ENCODE measurements at regions of chr1 and their contacts with region 1.

Region 1: GRCh38 chr1:22025368-22026155 is 24.1 kb downstream of the CELA3A start:
- DNase-seq: peak; percentile 91
- H3K4me3 Mint-ChIP-seq: peak overlapping the region; percentile 91
- H3K27ac Mint-ChIP-seq: peak overlapping the region; percentile 100
- H3K4me1 Mint-ChIP-seq: peaks cover 41% of the 10 kb centered on the region
- H3K27me3 Mint-ChIP-seq: no peaks in the 10 kb centered on the region

Region 2: DNA sequence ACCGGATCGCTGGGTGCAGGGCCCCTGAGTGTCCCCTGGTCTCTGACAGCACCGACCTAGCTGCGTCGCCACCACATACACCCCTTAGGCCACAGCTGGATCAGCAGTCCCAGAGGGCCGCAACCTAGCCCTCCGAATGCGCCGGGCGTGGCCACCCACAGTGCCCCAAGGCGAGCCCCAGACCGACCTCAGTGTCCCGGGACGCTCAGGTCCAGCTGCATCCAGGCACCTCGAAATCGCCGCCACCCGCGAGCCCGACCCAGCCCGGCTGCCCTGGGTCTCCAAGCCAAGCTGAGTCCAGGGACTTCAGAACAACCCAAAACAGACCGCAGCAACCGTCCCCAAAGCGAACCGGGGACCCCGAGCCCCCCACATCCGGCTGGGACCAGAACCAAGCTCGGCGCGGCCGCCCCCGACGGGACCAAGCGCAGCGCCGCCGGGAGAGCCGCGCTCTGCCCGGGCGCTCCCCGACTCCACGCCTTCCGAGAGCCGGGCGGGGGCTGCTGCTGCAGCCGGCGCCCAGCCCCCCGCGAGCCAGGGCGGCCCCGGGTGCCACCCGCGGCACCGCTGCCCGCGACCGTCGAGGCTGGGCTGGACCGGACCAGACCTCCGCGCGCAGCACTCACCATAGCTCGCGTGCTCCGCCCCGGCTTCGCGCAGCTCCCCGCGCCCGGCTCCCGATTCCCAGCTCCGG is 680.7 kb before region 1 on chr1:
- intact Hi-C with region 1: loop called (anchors 10 kb)
- DNase-seq: no peak
- H3K4me3 Mint-ChIP-seq: peak overlapping the region; percentile 83
- H3K27ac Mint-ChIP-seq: peak overlapping the region; percentile 51
- H3K4me1 Mint-ChIP-seq: peaks cover 30% of the 10 kb centered on the region
- H3K27me3 Mint-ChIP-seq: peaks cover under 1% of the 10 kb centered on the region

Region 3: GRCh38 chr1:21782868-21783678 is 242.5 kb before region 1 on chr1 and contains the start of gene USP48:
- intact Hi-C with region 1: loop called (anchors 2 kb)
- DNase-seq: peak; percentile 98
- H3K4me3 Mint-ChIP-seq: peak within 1 kb of the TSS; percentile 96
- H3K27ac Mint-ChIP-seq: peak within 1 kb of the TSS; percentile 100
- H3K4me1 Mint-ChIP-seq: peaks cover 19% of the 10 kb centered on the region
- H3K27me3 Mint-ChIP-seq: peaks cover 4% of the 10 kb centered on the region
- total RNA-seq, gene USP48: 101 TPM in 2 replicates

Region 4: DNA sequence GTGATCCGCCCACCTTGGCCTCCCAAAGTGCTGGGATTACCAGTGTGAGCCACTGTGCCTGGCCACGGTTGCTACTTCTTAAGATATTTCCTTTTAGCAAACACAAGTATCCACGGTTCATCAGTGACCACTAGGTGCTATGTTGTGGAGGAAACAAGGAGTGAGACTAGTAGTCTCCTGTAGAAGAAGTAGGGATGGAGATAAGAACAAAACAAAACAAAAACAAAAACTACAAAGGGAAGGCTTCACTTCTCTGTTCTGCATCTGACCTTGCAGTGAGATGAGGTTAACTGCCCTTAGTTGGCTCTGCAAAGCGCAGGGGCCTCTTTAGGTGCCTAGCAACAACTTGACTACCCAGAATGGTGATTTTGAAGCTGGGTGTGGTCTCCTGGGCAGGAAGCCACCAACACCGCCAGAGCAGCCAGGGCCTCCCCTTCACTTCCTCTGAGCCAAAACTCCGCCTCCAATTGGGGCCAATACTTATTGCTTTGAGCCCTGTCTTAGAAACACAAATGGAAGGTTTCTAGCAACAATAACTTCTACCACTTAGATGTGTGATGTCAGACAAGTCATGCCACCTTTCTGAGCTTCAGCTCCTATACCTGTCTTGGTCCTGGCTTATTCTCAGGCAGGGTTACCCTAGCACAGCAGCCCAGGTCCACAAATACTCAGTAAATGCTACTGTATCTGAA is 14.2 kb after region 1 on chr1:
- intact Hi-C with region 1: loop called (anchors 1 kb)
- DNase-seq: peak; percentile 92
- H3K4me3 Mint-ChIP-seq: peak overlapping the region; percentile 55
- H3K27ac Mint-ChIP-seq: peak overlapping the region; percentile 95
- H3K4me1 Mint-ChIP-seq: peaks cover 40% of the 10 kb centered on the region
- H3K27me3 Mint-ChIP-seq: no peaks in the 10 kb centered on the region

Region 5: GRCh38 chr1:22052115-22053016 is 26.8 kb after region 1 on chr1 and contains the start of gene CDC42:
- intact Hi-C with region 1: loop called (anchors 1 kb)
- DNase-seq: peak; percentile 96
- H3K4me3 Mint-ChIP-seq: peak within 1 kb of the TSS; percentile 98
- H3K27ac Mint-ChIP-seq: peak within 1 kb of the TSS; percentile 99
- H3K4me1 Mint-ChIP-seq: peaks cover 52% of the 10 kb centered on the region
- H3K27me3 Mint-ChIP-seq: no peaks in the 10 kb centered on the region
- total RNA-seq, gene CDC42: 342 and 350 TPM in 2 replicates

Region 6: DNA sequence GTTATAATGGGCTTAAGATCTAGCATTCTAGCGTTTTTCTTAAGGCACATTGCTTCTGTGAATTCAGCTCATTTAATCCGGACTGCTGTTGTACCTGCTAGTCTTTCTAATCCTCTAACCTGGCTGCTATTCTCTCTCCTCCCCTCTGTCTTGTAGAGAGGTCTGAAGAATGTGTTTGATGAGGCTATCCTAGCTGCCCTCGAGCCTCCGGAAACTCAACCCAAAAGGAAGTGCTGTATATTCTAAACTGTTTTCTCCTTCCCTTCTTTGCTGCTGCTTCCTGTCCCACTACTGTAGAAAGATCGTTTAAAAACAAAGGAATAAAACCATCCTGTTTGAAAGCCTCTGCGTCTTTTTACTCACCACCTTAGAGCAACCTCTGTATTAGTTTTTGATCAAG is 64.2 kb after region 1 on chr1:
- intact Hi-C with region 1: loop called (anchors 2 kb)
- DNase-seq: no peak
- H3K4me3 Mint-ChIP-seq: peak overlapping the region; percentile 65
- H3K27ac Mint-ChIP-seq: peak overlapping the region; percentile 67
- H3K4me1 Mint-ChIP-seq: peaks cover 71% of the 10 kb centered on the region
- H3K27me3 Mint-ChIP-seq: no peaks in the 10 kb centered on the region

Region 7: DNA sequence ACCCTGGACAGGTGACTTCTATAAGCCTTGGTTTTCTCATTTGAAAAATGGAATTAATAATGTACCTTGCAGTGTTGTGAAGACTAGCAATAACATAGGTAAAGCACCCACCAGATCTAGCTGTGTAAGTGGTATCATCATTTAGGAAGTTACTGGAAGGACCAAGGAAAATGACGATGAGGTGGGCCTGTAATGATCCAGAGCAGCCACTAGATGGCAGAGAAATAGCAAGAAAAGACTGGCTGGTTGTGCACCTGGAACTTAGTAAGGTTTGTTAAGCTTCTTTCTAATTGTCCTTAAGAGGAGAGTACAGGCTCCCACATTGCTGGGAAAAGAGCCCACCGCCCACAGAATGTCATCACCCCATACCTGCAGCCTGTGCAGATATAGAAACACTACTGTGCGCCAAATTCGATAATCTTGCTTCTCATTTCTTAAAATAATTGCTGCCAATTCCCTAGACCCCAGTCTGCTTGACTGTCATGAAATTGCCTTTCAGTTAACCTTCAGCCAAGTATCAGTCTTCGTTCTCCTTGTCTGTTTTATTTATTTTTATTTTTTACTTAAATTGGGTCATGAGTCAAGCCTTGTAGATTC is 80.1 kb after region 1 on chr1:
- intact Hi-C with region 1: no loop called
- DNase-seq: no peak
- H3K4me3 Mint-ChIP-seq: no peak overlapping the region
- H3K27ac Mint-ChIP-seq: peak overlapping the region; percentile 85
- H3K4me1 Mint-ChIP-seq: peaks cover 44% of the 10 kb centered on the region
- H3K27me3 Mint-ChIP-seq: no peaks in the 10 kb centered on the region